B cell (primary cell): ENCODE measurements at regions of chr19 and their contacts with region 1.

Region 1: GRCh38 chr19:3028305-3029064 is 595 bp downstream of the TLE2 start:
- DNase-seq: no peak
- ATAC-seq: peak; percentile 29
- H3K4me3 ChIP-seq: peak overlapping the region in 4 of 5 experiments; percentile 41 to 55 (median 52)
- H3K4me3 Mint-ChIP-seq: peak overlapping the region; percentile 71
- H3K27ac ChIP-seq: no peak overlapping the region
- H3K27ac Mint-ChIP-seq: no peak overlapping the region
- H3K4me1 ChIP-seq: peaks cover 24 to 30% of the 10 kb centered on the region in 2 donors
- H3K4me1 Mint-ChIP-seq: peaks cover 20% of the 10 kb centered on the region
- H3K27me3 ChIP-seq: peaks cover 0 to 58% (median 30%) of the 10 kb centered on the region in 4 experiments
- H3K27me3 Mint-ChIP-seq: peaks cover 53% of the 10 kb centered on the region
- CTCF ChIP-seq: no peak

Region 2: DNA sequence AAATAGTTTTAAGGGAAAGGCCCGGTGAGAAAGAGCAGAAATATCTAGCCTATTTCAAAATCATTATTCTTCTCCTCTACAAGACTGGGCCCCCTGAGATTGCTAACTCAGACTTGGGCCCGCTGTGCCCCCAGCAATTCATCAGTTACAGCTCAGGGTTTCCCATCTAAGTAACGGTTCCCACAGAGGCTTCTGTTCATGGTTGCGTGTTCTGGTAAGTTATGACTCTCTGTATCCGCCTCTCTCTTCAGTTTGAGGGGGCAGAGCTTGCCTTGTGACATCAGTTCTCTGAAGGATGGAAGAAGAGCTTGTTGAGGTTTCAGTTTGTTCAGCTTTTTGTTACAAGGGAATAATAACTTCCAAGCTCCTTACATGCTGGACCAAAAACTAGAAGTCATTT is 116.2 kb before region 1 on chr19:
- CTCF ChIA-PET with region 1: no interaction called
- POLR2A ChIA-PET with region 1: no interaction called
- intact Hi-C with region 1: no loop called
- DNase-seq: no peak
- ATAC-seq: no peak
- H3K4me3 ChIP-seq: no peak overlapping the region
- H3K4me3 Mint-ChIP-seq: no peak overlapping the region
- H3K27ac ChIP-seq: no peak overlapping the region
- H3K27ac Mint-ChIP-seq: no peak overlapping the region
- H3K4me1 ChIP-seq: no peaks in the 10 kb centered on the region
- H3K4me1 Mint-ChIP-seq: peaks cover 5% of the 10 kb centered on the region
- H3K27me3 ChIP-seq: no peaks in the 10 kb centered on the region
- H3K27me3 Mint-ChIP-seq: no peaks in the 10 kb centered on the region
- CTCF ChIP-seq: no peak

Region 3: DNA sequence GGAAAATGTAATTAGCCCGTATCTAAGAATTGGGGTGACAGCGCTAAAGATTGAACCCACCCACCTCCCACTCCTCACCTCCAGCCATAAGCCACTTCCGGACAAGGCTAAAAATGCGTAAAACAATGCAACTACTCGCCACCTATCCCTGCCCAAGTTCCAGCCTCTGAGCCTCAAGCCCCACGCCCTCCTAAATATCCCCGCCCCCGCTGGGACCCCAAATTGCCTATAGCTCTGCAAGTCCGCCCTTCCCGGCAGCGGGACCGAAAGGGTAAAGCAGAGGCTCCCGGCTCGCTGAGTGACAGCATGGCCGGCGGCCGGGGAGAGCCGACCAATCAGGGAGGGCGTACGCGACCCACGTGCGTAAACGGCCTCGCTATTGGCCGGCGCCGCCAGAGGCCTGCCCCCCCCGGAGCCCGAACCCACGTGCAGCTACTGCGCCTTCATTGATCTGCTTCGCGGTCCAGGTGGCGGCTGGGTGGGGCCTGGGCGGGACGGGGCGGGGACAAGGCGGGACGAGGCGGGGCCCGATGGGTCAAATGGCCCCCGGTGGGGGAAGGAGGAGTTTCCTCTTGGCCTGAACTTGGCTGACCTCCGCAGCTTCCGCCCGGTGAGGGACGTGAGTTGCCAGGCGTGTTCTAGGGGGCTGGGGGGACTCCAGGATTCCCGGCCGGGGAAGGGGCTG is 51.3 kb before region 1 on chr19 and contains the start of gene TLE6:
- CTCF ChIA-PET with region 1: no interaction called
- POLR2A ChIA-PET with region 1: interaction called, 10 read pairs
- intact Hi-C with region 1: no loop called
- DNase-seq: peak; percentile 96
- ATAC-seq: peak; percentile 99
- H3K4me3 ChIP-seq: peak within 1 kb of the TSS; percentile 55 to 77 (median 65)
- H3K4me3 Mint-ChIP-seq: peak within 1 kb of the TSS; percentile 96
- H3K27ac ChIP-seq: peak within 1 kb of the TSS in 1 of 2 donors; percentile 31
- H3K27ac Mint-ChIP-seq: peak within 1 kb of the TSS; percentile 72
- H3K4me1 ChIP-seq: peaks cover 14 to 27% of the 10 kb centered on the region in 2 donors
- H3K4me1 Mint-ChIP-seq: peaks cover 18% of the 10 kb centered on the region
- H3K27me3 ChIP-seq: peaks cover 0 to 5% (median 0%) of the 10 kb centered on the region in 4 experiments
- H3K27me3 Mint-ChIP-seq: no peaks in the 10 kb centered on the region
- CTCF ChIP-seq: no peak
- total RNA-seq, gene TLE6: 0.61 and 1.5 TPM in 2 replicates